ENCODE measurements at regions of chr12 and their contacts with region 1.

Region 1: GRCh38 chr12:6890789-6891645 is 13.6 kb upstream of the LRRC23 start:
- DNase-seq: peak; percentile 93 to 99
- ATAC-seq: peak; percentile 95 to 96
- H3K4me3 ChIP-seq: peak overlapping the region; percentile 40
- H3K27ac ChIP-seq: peak overlapping the region; percentile 94 to 98
- H3K4me1 ChIP-seq: peaks cover 38% of the 10 kb centered on the region
- CTCF ChIP-seq: peak; percentile 95
- EP300 ChIP-seq: peak in 1 of 2 experiments; percentile 54; a peak in 1 of 5 replicates
- POLR2A ChIP-seq: peak; percentile 70
- RAD21 ChIP-seq: peak; percentile 69 to 94

Region 2: DNA sequence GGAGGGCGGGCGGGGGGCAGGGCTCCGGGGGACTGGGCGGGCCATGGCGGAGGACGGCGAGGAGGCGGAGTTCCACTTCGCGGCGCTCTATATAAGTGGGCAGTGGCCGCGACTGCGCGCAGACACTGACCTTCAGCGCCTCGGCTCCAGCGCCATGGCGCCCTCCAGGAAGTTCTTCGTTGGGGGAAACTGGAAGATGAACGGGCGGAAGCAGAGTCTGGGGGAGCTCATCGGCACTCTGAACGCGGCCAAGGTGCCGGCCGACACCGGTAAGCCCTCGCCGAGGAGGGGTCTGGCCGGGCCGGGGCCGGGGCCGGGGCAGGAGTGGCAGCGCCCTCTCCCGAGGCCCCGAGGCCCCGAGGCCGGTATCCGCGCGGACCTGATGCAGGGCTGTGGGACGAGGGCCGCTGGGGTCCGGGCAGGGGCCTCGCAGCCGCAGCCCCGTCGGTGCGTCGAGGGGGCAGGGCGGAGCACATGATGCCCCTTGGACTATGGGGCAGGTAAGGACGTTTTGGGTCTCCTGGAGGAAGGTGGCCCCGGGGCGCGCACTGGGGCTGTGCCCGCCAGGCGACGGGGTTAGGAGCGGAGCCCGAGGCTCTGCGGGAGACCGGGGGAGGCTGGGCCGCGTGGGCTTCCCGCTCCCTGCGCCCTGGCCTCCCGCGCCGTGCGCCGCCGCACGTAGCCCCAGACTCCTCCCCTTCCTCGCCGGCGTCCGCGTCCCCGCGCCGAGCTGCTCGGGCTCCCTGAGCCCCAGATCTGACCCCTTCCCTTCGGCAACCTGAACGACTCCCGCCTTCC is 23.4 kb before region 1 on chr12 and contains the start of gene TPI1:
- CTCF ChIA-PET with region 1: interaction called, 399 read pairs
- POLR2A ChIA-PET with region 1: interaction called, 105 read pairs
- DNase-seq: peak; percentile 77 to 85
- ATAC-seq: peak; percentile 45 to 71
- H3K4me3 ChIP-seq: peak within 1 kb of the TSS; percentile 100
- H3K27ac ChIP-seq: peak within 1 kb of the TSS; percentile 97 to 99
- H3K4me1 ChIP-seq: peaks cover 42% of the 10 kb centered on the region
- CTCF ChIP-seq: no peak
- EP300 ChIP-seq: no peak
- POLR2A ChIP-seq: peak; percentile 99
- RAD21 ChIP-seq: no peak
- polyA plus RNA-seq, gene TPI1: 1,913 and 2,511 TPM in 2 replicates

Region 3: DNA sequence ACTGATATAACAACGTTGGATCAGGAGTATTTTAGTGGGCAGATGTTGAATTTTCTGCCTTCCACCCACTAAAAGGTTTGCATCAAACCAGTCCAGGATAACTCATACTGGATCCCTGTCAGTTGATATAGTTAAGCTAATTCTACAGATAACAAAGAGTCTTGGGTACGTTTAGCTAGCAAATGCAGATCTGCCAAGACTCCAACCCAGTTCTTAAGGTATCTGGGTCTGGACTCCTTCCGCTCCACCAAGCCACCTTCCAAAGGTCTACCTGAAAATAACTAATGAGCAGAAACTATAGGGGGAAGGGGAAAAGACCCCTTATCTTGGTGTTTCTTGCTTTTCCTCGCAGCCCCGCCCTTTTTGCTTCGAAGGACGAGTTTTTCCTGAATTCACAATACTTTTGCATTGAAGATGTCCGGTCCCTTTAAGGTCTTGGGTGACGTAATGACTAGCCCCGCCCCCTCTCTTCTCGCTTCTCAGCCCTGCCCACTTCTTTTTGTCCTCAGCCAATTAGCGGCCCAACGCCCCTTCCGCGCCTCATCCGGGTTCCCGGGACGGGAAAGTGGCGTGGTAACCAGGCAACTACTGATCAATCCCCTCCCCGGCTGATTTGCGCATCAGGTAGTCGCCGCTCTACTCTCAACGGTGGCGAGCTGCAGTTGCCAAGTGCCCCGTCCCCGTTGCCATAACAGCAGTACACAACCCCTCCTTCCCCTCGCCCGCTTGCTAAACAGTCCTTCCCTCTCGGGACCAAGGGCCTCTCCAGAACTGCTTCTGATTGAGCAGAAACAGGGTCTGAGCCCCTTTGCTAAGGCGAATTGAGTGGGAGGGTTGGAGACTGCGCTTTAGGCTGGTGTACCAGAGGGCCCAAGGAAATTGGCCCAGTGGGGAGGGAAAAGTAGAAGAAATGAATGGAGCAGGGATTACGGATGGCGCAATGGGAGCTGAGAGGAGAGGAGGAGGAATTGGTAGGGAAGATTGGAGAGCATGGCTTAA is 13.6 kb after region 1 on chr12 and contains the start of gene LRRC23:
- CTCF ChIA-PET with region 1: interaction called, 91 read pairs
- POLR2A ChIA-PET with region 1: interaction called, 10 read pairs
- DNase-seq: peak; percentile 95 to 98
- ATAC-seq: peak; percentile 94 to 97
- H3K4me3 ChIP-seq: peak within 1 kb of the TSS; percentile 78
- H3K27ac ChIP-seq: peak within 1 kb of the TSS; percentile 82 to 91
- H3K4me1 ChIP-seq: peaks cover 11% of the 10 kb centered on the region; the same call in 2 of the 3 replicates
- CTCF ChIP-seq: no peak
- EP300 ChIP-seq: no peak
- POLR2A ChIP-seq: peak; percentile 71
- RAD21 ChIP-seq: no peak
- polyA plus RNA-seq, gene LRRC23: 33.3 and 40.4 TPM in 2 replicates

Region 4: DNA sequence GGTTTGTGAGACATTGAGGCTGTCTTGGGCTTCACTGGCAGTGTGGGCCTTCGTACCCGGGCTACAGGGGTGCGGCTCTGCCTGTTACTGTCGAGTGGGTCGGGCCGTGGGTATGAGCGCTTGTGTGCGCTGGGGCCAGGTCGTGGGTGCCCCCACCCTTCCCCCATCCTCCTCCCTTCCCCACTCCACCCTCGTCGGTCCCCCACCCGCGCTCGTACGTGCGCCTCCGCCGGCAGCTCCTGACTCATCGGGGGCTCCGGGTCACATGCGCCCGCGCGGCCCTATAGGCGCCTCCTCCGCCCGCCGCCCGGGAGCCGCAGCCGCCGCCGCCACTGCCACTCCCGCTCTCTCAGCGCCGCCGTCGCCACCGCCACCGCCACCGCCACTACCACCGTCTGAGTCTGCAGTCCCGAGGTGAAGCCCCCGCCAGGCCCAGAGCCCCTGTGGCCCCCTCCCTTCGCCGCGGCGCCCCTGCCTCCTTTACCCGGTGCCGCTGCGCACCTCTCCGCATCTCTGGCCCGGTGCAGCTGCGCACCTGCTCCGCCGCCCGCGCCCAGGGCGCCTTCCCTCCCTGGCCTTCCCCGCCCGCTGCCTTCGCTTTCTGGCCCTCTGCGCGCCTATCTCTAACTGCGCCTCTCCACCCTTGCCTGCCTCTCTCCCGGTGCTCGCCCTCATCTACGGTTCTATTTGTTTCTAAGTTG is 23.4 kb after region 1 on chr12 and contains the start of gene ENO2:
- CTCF ChIA-PET with region 1: interaction called, 91 read pairs
- POLR2A ChIA-PET with region 1: interaction called, 6 read pairs
- DNase-seq: peak; percentile 62 to 79
- ATAC-seq: peak; percentile 86 to 90
- H3K4me3 ChIP-seq: peak within 1 kb of the TSS; percentile 63
- H3K27ac ChIP-seq: peak within 1 kb of the TSS; percentile 74 to 93
- H3K4me1 ChIP-seq: peaks cover 17% of the 10 kb centered on the region
- CTCF ChIP-seq: no peak
- EP300 ChIP-seq: no peak
- POLR2A ChIP-seq: peak; percentile 39; the same call in 1 of the 2 replicates
- RAD21 ChIP-seq: no peak
- polyA plus RNA-seq, gene ENO2: 26.2 and 45.1 TPM in 2 replicates

Region 5: GRCh38 chr12:6937481-6938297 is 46.7 kb after region 1 on chr12:
- CTCF ChIA-PET with region 1: interaction called, 23 read pairs
- POLR2A ChIA-PET with region 1: interaction called, 4 read pairs
- DNase-seq: peak; percentile 80 to 98
- ATAC-seq: peak; percentile 86 to 93
- H3K4me3 ChIP-seq: peak overlapping the region; percentile 49
- H3K27ac ChIP-seq: peak overlapping the region; percentile 81 to 92
- H3K4me1 ChIP-seq: peaks cover 45% of the 10 kb centered on the region
- CTCF ChIP-seq: peak; percentile 84
- EP300 ChIP-seq: no peak
- POLR2A ChIP-seq: peak; percentile 92
- RAD21 ChIP-seq: peak; percentile 37 to 40; a peak in 4 of 5 replicates

Region 6: DNA sequence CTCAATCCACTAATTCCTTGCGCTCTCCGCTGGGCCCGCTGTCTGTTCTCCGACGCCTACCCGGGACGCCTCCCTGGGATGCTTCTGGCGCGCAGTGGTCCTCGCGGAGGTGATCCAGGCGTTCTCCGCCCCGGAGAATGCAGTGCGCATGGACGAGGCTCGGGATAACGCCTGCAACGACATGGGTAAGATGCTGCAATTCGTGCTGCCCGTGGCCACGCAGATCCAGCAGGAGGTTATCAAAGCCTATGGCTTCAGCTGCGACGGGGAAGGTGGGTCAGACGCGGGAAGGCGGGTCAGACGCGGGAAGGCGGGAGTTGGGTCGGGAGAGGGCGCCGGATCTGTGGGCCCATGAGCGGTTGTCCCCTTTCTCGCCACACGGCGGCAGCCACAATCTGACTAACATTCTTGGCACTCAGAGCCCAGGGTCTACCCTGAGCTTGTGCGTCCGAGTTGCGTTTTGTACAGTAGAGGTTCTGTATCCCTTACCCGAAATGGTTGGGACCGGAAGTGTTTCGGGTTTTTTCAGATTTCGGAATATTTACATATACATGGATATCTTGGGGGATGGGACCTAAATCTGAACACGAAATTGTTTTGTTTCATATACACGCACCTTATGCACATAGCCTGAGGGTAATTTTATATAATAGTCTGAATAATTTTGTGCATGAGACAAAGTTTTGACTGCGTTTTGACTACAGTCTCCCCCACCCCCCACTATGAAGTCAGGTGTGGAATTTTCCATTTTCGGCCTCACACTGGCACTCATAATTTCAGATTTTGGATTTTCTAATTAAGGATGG is 53.6 kb after region 1 on chr12:
- CTCF ChIA-PET with region 1: interaction called, 23 read pairs
- POLR2A ChIA-PET with region 1: interaction called, 16 read pairs
- DNase-seq: peak; percentile 93 to 97
- ATAC-seq: peak; percentile 52 to 73
- H3K4me3 ChIP-seq: peak overlapping the region; percentile 59
- H3K27ac ChIP-seq: peak overlapping the region; percentile 80 to 90
- H3K4me1 ChIP-seq: peaks cover 36% of the 10 kb centered on the region
- CTCF ChIP-seq: peak; percentile 85
- EP300 ChIP-seq: no peak
- POLR2A ChIP-seq: no peak; the same call in 1 of the 2 replicates
- RAD21 ChIP-seq: peak; percentile 87

Region 7: GRCh38 chr12:7092229-7092985 is 201.4 kb after region 1 on chr12 and contains the start of gene C1R:
- CTCF ChIA-PET with region 1: no interaction called
- POLR2A ChIA-PET with region 1: no interaction called
- DNase-seq: peak; percentile 69 to 72
- ATAC-seq: peak; percentile 52 to 80
- H3K4me3 ChIP-seq: peak within 1 kb of the TSS; percentile 37
- H3K27ac ChIP-seq: peak within 1 kb of the TSS; percentile 85 to 91
- H3K4me1 ChIP-seq: peaks cover 20% of the 10 kb centered on the region; the same call in 2 of the 3 replicates
- CTCF ChIP-seq: peak; percentile 92
- EP300 ChIP-seq: no peak
- POLR2A ChIP-seq: no peak
- RAD21 ChIP-seq: peak; percentile 88 to 92
- polyA plus RNA-seq, gene C1R: 36.0 and 57.8 TPM in 2 replicates

Measured in A549 (cell line).